ENCODE measurements at regions of chr13 and their contacts with region 1.

Region 1: GRCh38 chr13:31044377-31045285 is 112.2 kb downstream of the TEX26 start:
- DNase-seq: peak; percentile 56
- ATAC-seq: peak; percentile 97
- H3K4me3 ChIP-seq: no peak overlapping the region
- H3K27ac ChIP-seq: no peak overlapping the region
- H3K4me1 ChIP-seq: peaks cover 20% of the 10 kb centered on the region
- H3K27me3 ChIP-seq: no peaks in the 10 kb centered on the region
- CTCF ChIP-seq: peak; percentile 90 to 97 (median 94)
- EP300 ChIP-seq: no peak
- POLR2A ChIP-seq: no peak
- RAD21 ChIP-seq: peak; percentile 95

Region 2: GRCh38 chr13:30607908-30608307 is 436.7 kb before region 1 on chr13:
- CTCF ChIA-PET with region 1: no interaction called
- POLR2A ChIA-PET with region 1: no interaction called
- RAD21 ChIA-PET with region 1: no interaction called
- SMC1A ChIA-PET with region 1: no interaction called
- in situ Hi-C with region 1: no loop called
- intact Hi-C with region 1: no loop called
- DNase-seq: peak; percentile 85
- ATAC-seq: peak; percentile 98
- H3K4me3 ChIP-seq: no peak overlapping the region
- H3K27ac ChIP-seq: no peak overlapping the region
- H3K4me1 ChIP-seq: peaks cover 17% of the 10 kb centered on the region
- H3K27me3 ChIP-seq: no peaks in the 10 kb centered on the region
- CTCF ChIP-seq: no peak
- EP300 ChIP-seq: peak; percentile 69 to 75; a peak in 3 of 4 replicates
- POLR2A ChIP-seq: no peak
- RAD21 ChIP-seq: no peak

Region 3: DNA sequence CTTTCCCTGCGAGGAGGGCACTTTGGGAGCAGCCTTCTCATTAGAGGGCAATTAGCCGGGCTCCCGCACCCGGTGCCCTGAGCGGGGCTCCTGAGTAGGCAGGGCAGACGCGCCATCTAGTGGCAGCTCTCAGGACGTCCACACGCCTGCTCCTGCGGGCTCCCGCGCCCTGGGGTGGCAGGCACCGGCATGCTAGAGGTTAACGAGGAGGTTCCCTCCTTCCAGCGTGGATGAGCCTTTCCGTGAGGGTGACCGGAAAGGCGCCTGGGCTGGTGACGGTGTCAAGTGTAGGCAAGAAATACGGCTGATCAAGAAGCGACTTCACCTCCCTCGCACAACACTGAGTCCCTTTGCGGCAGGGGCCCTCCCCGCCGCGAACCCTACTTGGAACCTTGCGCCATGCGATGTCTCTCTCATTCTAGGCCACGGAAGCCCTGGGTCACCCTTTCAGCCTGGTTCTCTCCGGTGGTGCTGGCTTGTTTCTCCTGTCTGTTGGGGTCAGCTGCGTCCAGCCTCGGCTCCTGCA is 241.6 kb before region 1 on chr13:
- CTCF ChIA-PET with region 1: interaction called, 5 read pairs
- POLR2A ChIA-PET with region 1: no interaction called
- RAD21 ChIA-PET with region 1: interaction called, 3 read pairs
- SMC1A ChIA-PET with region 1: interaction called, 7 read pairs
- in situ Hi-C with region 1: no loop called
- intact Hi-C with region 1: loop called (anchors 1 kb)
- DNase-seq: peak; percentile 32
- ATAC-seq: peak; percentile 100
- H3K4me3 ChIP-seq: no peak overlapping the region
- H3K27ac ChIP-seq: no peak overlapping the region
- H3K4me1 ChIP-seq: no peaks in the 10 kb centered on the region
- H3K27me3 ChIP-seq: no peaks in the 10 kb centered on the region; a peak in 1 of 4 replicates
- CTCF ChIP-seq: peak; percentile 88 to 95 (median 92)
- EP300 ChIP-seq: no peak
- POLR2A ChIP-seq: no peak
- RAD21 ChIP-seq: peak; percentile 95

Region 4: DNA sequence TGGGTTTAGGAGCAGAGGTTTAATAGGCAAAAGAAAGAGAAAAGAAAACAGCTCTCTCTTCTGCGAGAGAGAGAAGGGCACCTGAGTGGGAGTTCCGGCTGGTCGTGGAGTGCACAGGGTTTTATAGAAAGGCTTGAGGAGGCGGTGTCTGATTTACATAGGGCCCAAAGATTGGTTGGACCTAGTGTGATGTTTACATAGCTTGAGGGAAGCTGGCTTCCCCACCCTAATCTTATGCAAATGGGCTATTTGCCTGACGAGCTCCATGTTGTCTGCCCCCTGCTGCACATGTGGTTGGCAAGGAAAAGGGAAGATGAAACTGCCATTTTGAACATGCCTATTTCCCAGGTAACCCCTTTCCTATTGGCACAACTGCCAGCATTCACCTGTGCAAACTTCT is 160.1 kb before region 1 on chr13:
- CTCF ChIA-PET with region 1: no interaction called
- POLR2A ChIA-PET with region 1: no interaction called
- RAD21 ChIA-PET with region 1: no interaction called
- SMC1A ChIA-PET with region 1: no interaction called
- in situ Hi-C with region 1: no loop called
- intact Hi-C with region 1: no loop called
- DNase-seq: no peak
- ATAC-seq: no peak
- H3K4me3 ChIP-seq: no peak overlapping the region
- H3K27ac ChIP-seq: no peak overlapping the region
- H3K4me1 ChIP-seq: no peaks in the 10 kb centered on the region
- H3K27me3 ChIP-seq: peaks cover 1 to 11% of the 10 kb centered on the region in 2 experiments; a peak in 3 of 4 replicates
- CTCF ChIP-seq: no peak
- EP300 ChIP-seq: no peak
- POLR2A ChIP-seq: no peak
- RAD21 ChIP-seq: no peak

Region 5: GRCh38 chr13:30963791-30964190 is 80.8 kb before region 1 on chr13:
- CTCF ChIA-PET with region 1: interaction called, 10 read pairs
- POLR2A ChIA-PET with region 1: no interaction called
- RAD21 ChIA-PET with region 1: no interaction called
- SMC1A ChIA-PET with region 1: interaction called, 4 read pairs
- in situ Hi-C with region 1: no loop called
- intact Hi-C with region 1: no loop called
- DNase-seq: no peak
- ATAC-seq: no peak
- H3K4me3 ChIP-seq: no peak overlapping the region
- H3K27ac ChIP-seq: no peak overlapping the region
- H3K4me1 ChIP-seq: no peaks in the 10 kb centered on the region
- H3K27me3 ChIP-seq: no peaks in the 10 kb centered on the region
- CTCF ChIP-seq: no peak
- EP300 ChIP-seq: no peak
- POLR2A ChIP-seq: no peak
- RAD21 ChIP-seq: no peak

Region 6: DNA sequence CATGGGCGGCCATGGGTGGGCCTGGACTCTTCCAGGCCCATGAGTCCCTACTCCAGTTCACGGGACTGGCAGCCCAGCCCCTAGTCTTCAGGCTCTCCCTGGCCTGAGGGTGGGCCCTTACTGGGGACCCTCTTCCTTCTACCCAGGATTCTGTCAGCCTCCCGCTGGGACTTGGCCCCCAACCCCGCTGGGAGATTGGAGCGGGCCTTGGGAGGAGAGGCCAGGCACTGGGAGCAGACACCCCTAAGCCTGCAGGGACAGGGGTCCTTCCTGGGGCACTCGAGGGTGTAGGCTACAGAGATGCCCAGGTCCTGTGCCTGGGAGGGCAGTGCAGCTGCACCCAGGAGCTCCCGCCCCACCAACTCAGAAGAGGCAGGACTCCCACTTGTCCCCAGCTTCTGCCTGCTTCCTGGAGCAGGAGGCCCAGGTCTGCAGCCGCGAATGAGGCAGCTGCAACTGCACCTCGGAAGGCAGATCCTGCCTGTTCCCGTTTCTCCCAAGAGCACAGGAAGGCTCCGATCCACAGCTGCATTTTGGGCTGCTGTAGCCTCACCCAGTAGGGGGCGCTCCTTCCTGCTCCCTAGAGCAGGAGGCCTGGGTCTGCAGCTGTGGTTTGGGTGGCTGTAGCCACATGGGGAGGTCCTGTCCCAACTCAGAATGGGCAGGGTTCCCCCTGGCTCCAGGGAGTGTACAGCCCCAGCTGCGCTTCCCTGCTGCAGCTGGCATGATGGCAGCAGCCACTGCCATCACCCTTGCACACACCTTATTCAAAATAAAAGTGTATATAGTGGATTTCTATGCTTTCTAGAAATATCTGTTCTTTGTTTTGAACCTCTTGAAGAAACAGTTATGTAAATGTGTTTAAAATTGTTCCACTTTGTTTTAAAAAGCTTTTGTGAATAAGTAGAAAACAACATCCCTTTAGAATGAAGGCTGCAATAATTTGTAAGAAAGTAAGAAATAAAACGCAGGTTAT is 65.4 kb before region 1 on chr13:
- CTCF ChIA-PET with region 1: interaction called, 75 read pairs
- POLR2A ChIA-PET with region 1: no interaction called
- RAD21 ChIA-PET with region 1: interaction called, 33 read pairs
- SMC1A ChIA-PET with region 1: interaction called, 25 read pairs
- in situ Hi-C with region 1: no loop called
- intact Hi-C with region 1: loop called (anchors 1 kb)
- DNase-seq: no peak
- ATAC-seq: peak; percentile 60
- H3K4me3 ChIP-seq: no peak overlapping the region
- H3K27ac ChIP-seq: no peak overlapping the region
- H3K4me1 ChIP-seq: 0 out of 2 replicates have a peak, but pooled peaks cover 1% of the 10 kb centered on the region
- H3K27me3 ChIP-seq: no peaks in the 10 kb centered on the region
- CTCF ChIP-seq: peak; percentile 53 to 88 (median 80)
- EP300 ChIP-seq: no peak
- POLR2A ChIP-seq: no peak
- RAD21 ChIP-seq: peak; percentile 66

Region 7: DNA sequence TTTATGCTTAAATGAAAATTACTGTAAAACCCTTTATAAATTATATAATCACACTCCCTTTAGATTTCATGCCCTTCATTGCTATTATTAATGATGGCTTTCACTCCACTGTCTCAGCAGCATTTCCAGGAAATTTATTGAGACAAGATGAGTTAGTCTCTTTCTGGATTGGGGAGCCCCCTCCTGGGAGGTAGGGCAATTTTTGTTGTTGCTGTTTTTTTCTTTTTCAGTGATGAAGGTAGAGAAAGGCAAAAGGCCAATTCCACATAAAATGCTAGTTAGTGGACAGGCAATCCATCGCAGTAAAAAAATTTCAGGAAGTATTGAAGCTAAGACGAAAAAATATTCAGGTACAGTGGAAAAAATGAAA is 32.0 kb before region 1 on chr13:
- CTCF ChIA-PET with region 1: interaction called, 11 read pairs
- POLR2A ChIA-PET with region 1: interaction called, 3 read pairs
- RAD21 ChIA-PET with region 1: interaction called, 5 read pairs
- SMC1A ChIA-PET with region 1: interaction called, 6 read pairs
- in situ Hi-C with region 1: no loop called
- intact Hi-C with region 1: loop called (anchors 2 kb)
- DNase-seq: no peak
- ATAC-seq: no peak
- H3K4me3 ChIP-seq: no peak overlapping the region
- H3K27ac ChIP-seq: no peak overlapping the region
- H3K4me1 ChIP-seq: peaks cover 14% of the 10 kb centered on the region
- H3K27me3 ChIP-seq: no peaks in the 10 kb centered on the region
- CTCF ChIP-seq: peak in 2 of 3 experiments; percentile 5 to 9; a peak in 2 of 6 replicates
- EP300 ChIP-seq: no peak
- POLR2A ChIP-seq: no peak
- RAD21 ChIP-seq: no peak